Sigmoid colon (tissue), 7 donors: ENCODE measurements at regions of chr20 and their contacts with region 1.

Region 1: DNA sequence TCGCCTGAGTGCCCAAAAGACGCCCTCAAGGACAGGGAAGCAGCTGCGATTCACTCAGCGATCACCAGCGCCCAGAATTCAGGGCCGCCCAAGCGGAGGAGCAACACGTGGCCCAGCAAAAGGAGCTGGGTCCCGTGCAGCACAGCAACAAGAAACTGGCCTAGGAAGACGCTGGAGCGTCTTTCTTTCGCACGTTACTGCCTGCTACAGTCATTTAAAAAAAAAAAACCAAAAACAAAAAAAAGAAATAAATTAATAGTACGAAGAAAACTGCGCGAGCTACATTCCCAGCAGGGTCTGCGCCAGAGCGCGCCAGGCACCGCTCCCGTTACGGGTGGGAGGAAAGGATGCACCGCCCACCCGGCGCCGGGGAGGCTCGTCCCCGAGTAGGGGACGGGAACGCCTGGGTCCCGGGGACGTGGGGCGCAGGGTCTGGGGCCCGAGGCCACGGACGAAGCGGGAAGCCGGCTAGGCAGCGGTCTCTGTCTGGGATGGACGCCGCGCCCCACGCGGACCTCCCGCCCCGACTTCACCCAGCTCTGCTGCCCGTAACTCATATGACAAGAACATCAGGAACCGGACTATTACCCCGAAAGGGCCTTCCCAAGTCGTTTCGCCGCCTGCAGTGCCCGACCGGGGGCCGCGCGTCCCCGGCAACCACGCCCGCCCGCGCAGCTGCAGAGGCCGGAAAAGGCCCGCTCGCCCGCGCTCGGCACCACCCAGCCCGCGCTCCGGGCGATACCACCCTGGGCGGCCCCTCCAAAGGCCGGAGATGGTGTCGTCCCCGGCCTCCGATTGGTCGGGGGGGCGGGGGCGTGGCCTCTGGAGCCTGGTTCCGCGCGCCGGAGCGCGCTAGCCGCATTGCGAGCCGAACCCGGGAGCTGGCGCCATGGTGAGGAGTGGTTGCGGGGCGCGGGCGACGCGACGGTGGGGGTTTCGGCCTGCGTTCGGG is at the start of gene NOP56:
- DNase-seq: peak; percentile 95
- H3K4me3 ChIP-seq: peak within 1 kb of the TSS; percentile 67 to 97 (median 90)
- H3K27ac ChIP-seq: peak within 1 kb of the TSS; percentile 87 to 96 (median 92)
- H3K4me1 ChIP-seq: peaks cover 0 to 31% (median 21%) of the 10 kb centered on the region in 4 donors
- H3K27me3 ChIP-seq: no peaks in the 10 kb centered on the region
- CTCF ChIP-seq: no peak
- EP300 ChIP-seq: peak in 1 of 4 donors; percentile 1
- POLR2A ChIP-seq: peak in 1 of 2 donors; percentile 27
- total RNA-seq, gene NOP56: 53.2 to 69.8 (median 65.2) TPM

Region 2: GRCh38 chr20:2234598-2235191 is 417.4 kb before region 1 on chr20:
- intact Hi-C with region 1: no loop called
- DNase-seq: no peak
- H3K4me3 ChIP-seq: no peak overlapping the region
- H3K27ac ChIP-seq: no peak overlapping the region
- H3K4me1 ChIP-seq: no peaks in the 10 kb centered on the region
- H3K27me3 ChIP-seq: no peaks in the 10 kb centered on the region
- CTCF ChIP-seq: no peak
- EP300 ChIP-seq: no peak
- POLR2A ChIP-seq: no peak

Region 3: GRCh38 chr20:2470423-2471193 is 181.4 kb before region 1 on chr20 and contains the start of gene SNRPB:
- intact Hi-C with region 1: loop called (anchors 5 kb)
- DNase-seq: peak; percentile 99
- H3K4me3 ChIP-seq: peak within 1 kb of the TSS; percentile 45 to 79 (median 69)
- H3K27ac ChIP-seq: peak within 1 kb of the TSS; percentile 85 to 95 (median 92)
- H3K4me1 ChIP-seq: peaks cover 0 to 32% (median 27%) of the 10 kb centered on the region in 4 donors
- H3K27me3 ChIP-seq: no peaks in the 10 kb centered on the region
- CTCF ChIP-seq: no peak
- EP300 ChIP-seq: peak in 1 of 4 donors; percentile 12
- POLR2A ChIP-seq: peak; percentile 62 to 83
- total RNA-seq, gene SNRPB: 80.0 to 165 (median 142) TPM

Region 4: DNA sequence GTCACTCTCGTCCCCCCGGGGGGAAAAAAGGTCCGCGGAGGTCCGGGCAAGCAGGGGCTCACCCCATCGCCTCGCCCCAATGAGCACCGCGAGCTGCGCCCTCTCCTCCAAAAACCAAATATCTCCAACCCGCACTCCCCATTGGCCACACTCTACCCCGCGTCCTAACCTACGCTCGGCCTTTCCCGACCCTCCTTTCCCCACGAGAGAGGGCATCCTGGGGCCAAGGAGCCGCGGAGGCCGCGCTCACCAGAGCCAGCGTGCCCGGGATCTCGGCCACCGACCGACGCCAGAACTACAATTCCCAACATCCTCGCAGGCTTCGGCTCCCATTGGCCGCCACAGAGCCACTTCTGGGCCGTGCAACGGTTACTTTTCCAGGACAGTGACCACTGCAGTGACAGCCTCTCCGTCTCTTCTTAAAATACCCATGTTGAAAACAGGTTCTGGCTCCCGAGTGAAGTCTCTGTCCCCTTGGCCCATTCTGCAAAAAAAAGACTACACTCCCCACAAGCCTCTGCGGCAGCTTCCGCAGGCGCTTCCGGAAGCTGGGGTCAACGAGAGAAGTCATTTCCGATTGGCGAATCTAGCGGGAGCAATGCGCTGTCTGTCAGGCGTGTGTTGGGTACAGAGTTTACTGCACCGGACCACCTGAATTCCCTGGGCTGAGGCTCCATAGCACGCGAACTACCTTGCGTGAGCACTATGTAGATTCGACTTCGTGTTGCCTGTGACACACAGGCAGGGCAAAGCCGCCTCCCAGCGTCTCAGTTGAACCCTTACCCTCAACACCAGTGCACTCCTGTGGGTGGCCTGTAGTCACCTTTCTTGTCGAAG is 143.2 kb before region 1 on chr20 and contains the start of gene ZNF343:
- intact Hi-C with region 1: loop called (anchors 5 kb)
- DNase-seq: peak; percentile 89
- H3K4me3 ChIP-seq: peak within 1 kb of the TSS; percentile 73 to 96 (median 86)
- H3K27ac ChIP-seq: peak within 1 kb of the TSS; percentile 81 to 88 (median 86)
- H3K4me1 ChIP-seq: peaks cover 0 to 21% (median 14%) of the 10 kb centered on the region in 4 donors
- H3K27me3 ChIP-seq: no peaks in the 10 kb centered on the region
- CTCF ChIP-seq: no peak
- EP300 ChIP-seq: no peak
- POLR2A ChIP-seq: peak; percentile 9 to 61
- total RNA-seq, gene ZNF343: 10.7 to 16.3 (median 11.8) TPM

Region 5: DNA sequence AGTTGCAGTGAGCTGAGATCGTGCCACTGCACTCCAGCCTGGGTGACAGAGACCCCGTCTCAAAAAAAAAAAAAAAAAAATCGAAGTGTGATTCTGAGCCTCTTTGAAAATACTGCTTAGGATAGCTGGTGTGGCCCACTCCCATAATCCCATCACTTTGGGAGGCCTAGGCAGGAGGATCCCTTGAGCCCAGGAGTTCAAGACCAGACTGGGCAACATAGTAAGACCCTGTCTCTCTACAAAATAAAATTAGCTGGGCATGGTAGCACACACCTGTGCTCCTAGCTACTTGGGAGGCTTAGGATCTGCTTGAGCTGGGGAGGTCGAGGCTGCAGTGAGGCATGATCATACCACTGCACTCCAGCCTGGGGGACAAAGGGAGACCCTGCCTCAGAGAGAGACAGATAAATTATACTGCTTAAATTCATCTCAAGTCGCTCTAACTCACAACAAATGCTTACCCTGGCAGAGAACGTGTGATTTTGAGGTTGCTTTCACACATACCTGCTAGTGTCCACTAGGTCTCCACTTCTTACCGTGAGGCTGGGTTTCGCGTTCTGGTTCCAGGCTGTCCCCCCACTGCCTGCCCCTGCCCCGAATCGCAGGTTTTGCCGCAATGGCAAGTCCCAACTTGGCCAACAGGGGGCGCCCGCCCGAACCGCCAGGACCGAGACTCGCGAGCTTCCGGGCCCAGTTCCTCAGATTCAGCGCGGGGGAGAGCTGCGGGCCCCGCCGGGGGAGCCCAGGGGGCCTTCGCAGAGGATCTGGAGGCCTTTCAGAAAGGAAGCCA is 127.9 kb before region 1 on chr20:
- intact Hi-C with region 1: loop called (anchors 2 kb)
- DNase-seq: peak; percentile 92
- H3K4me3 ChIP-seq: peak overlapping the region; percentile 65 to 87 (median 72)
- H3K27ac ChIP-seq: peak overlapping the region; percentile 78 to 91 (median 89)
- H3K4me1 ChIP-seq: peaks cover 0 to 11% (median 5%) of the 10 kb centered on the region in 4 donors
- H3K27me3 ChIP-seq: no peaks in the 10 kb centered on the region
- CTCF ChIP-seq: peak; percentile 89 to 99 (median 93)
- EP300 ChIP-seq: no peak
- POLR2A ChIP-seq: peak; percentile 39 to 56

Region 6: DNA sequence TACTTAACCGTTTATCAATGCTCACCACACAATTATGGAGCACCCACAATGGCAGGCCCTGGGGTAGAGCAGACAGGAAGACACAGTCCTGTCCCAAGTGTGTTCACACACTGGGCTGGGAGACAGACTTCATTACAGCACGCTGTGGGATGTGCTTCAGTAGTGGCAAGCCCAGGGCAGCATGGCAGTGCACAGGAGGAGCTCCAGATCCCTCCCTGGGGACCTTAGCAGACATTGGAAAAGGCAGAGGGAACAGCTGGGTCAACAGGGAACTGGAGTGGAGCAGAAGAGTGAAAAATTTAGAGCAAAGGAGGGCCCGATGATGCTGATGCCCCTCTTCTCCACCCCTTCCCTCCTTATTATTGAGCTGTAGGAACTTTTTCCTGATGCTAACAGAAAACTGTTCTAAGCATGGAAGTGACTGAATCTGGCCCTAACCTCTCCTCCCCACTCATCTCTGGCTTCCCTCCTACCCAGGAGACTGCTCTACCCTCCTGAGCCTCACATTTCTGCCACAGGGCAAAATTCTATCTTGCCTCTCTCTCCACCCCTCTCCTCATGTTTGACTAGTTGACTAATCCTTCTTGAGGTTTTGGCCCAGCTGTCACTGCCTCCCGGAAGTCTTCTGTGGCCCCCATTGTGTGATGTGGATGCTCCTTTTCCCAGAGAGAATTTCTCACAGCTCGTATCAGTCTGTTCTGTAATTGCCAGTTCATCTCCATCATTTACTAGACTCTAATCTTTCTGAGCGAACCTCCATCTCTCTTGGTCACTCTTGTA is 40.9 kb before region 1 on chr20:
- intact Hi-C with region 1: no loop called
- DNase-seq: no peak
- H3K4me3 ChIP-seq: no peak overlapping the region
- H3K27ac ChIP-seq: no peak overlapping the region
- H3K4me1 ChIP-seq: no peaks in the 10 kb centered on the region
- H3K27me3 ChIP-seq: no peaks in the 10 kb centered on the region
- CTCF ChIP-seq: no peak
- EP300 ChIP-seq: no peak
- POLR2A ChIP-seq: no peak

Region 7: GRCh38 chr20:2663887-2664719 is 12.1 kb after region 1 on chr20 and contains the start of gene IDH3B:
- intact Hi-C with region 1: loop called (anchors 1 kb)
- DNase-seq: peak; percentile 97
- H3K4me3 ChIP-seq: peak within 1 kb of the TSS; percentile 75 to 96 (median 88)
- H3K27ac ChIP-seq: peak within 1 kb of the TSS; percentile 78 to 94 (median 92)
- H3K4me1 ChIP-seq: peaks cover 0 to 18% (median 17%) of the 10 kb centered on the region in 4 donors
- H3K27me3 ChIP-seq: no peaks in the 10 kb centered on the region
- CTCF ChIP-seq: no peak
- EP300 ChIP-seq: no peak
- POLR2A ChIP-seq: peak; percentile 81 to 84
- total RNA-seq, gene IDH3B: 105 to 131 (median 122) TPM

Region 8: DNA sequence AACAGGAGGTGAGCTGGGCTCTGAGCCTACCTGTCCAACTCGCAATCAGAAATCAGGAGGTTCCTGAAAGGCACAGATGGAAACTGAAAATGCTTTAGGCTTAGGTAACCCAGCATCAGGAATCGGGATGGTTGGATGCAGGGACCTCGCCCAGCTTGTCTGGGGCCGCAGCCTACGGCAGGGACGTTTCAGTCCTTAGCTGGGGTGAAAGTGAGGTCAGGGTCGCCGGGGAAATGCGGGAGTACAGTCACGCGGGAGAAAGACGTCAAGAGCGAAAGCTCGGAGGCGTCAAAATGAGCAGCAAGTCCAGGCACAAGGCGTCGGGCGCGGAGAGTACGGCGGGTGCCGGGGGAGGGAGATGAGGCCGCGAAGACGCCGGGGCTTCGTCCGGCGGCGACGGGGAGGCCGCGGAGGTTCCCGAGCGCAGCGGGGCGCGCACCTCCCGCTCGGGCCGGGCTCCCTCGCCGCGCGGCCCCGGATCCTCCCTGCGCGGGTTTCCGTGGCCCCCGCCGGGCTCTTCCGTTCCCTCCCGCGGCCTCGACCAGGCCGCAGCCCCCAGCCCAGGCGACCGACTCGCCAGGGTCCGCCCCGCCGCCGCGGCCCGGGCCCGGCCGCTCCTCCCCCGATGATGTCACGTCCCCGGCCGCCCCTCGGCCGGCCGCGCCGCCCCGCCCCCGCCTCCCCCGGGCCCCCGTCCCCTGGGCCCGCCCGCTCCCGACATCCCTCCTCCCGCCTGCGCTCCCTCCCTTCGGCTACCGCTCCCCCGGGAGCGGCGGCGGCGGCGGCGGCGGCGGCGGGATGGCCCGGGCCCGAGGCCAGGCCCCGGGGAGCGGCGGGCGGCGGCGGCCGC is 40.2 kb after region 1 on chr20 and contains the start of gene EBF4:
- intact Hi-C with region 1: loop called (anchors 1 kb)
- DNase-seq: peak; percentile 86
- H3K4me3 ChIP-seq: peak within 1 kb of the TSS; percentile 39 to 72 (median 70)
- H3K27ac ChIP-seq: peak within 1 kb of the TSS; percentile 81 to 96 (median 92)
- H3K4me1 ChIP-seq: peaks cover 0 to 23% (median 20%) of the 10 kb centered on the region in 4 donors
- H3K27me3 ChIP-seq: no peaks in the 10 kb centered on the region
- CTCF ChIP-seq: no peak
- EP300 ChIP-seq: peak in 1 of 4 donors; percentile 55
- POLR2A ChIP-seq: no peak
- total RNA-seq, gene EBF4: 14.8 to 37.5 (median 30.8) TPM

Region 9: DNA sequence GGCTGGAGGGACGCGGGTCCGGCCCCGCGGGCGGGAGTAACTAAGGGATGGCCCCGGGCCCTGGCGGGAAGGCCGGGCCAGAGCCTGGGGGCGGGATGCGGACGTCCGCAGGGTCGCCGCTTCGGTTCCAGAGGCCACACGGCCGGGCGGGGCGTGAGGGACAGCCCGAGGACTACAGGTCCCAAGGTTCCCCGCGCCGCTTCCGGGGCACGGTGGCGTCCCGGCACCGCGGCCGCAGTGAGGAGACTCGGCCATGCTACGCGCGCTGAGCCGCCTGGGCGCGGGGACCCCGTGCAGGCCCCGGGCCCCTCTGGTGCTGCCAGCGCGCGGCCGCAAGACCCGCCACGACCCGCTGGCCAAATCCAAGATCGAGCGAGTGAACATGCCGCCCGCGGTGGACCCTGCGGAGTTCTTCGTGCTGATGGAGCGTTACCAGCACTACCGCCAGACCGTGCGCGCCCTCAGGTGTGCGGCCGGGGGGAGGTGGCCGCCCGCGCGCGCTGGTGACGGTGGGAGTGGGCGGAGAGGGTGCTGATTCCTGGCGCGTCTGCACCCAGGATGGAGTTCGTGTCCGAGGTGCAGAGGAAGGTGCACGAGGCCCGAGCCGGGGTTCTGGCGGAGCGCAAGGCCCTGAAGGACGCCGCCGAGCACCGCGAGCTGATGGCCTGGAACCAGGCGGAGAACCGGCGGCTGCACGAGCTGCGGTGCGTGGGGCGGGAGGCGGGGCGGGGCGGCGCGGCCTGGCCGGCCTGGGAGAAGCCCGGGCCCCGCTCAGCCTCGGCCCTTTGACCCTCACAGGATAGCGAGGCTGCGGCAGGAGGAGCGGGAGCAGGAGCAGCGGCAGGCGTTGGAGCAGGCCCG is 394.0 kb after region 1 on chr20 and contains the start of gene MRPS26:
- intact Hi-C with region 1: loop called (anchors 5 kb)
- DNase-seq: peak; percentile 93
- H3K4me3 ChIP-seq: peak within 1 kb of the TSS; percentile 74 to 95 (median 86)
- H3K27ac ChIP-seq: peak within 1 kb of the TSS; percentile 86 to 92 (median 89)
- H3K4me1 ChIP-seq: peaks cover 0 to 19% (median 18%) of the 10 kb centered on the region in 4 donors
- H3K27me3 ChIP-seq: no peaks in the 10 kb centered on the region
- CTCF ChIP-seq: no peak
- EP300 ChIP-seq: no peak
- POLR2A ChIP-seq: peak; percentile 34 to 41
- total RNA-seq, gene MRPS26: 33.5 to 71.7 (median 65.0) TPM